BJ (cell line): ENCODE measurements at regions of chr17 and their contacts with region 1.

Region 1: GRCh38 chr17:29241015-29241963 is 5.4 kb upstream of the CRYBA1 start:
- DNase-seq: peak; percentile 90
- H3K4me3 ChIP-seq: no peak overlapping the region
- H3K27me3 ChIP-seq: no peaks in the 10 kb centered on the region
- CTCF ChIP-seq: peak; percentile 24; the same call in 1 of the 2 replicates

Region 2: GRCh38 chr17:29252101-29252866 is 11.0 kb after region 1 on chr17:
- CTCF ChIA-PET with region 1: interaction called, 33 read pairs
- POLR2A ChIA-PET with region 1: interaction called, 4 read pairs
- DNase-seq: no peak
- H3K4me3 ChIP-seq: no peak overlapping the region
- H3K27me3 ChIP-seq: no peaks in the 10 kb centered on the region
- CTCF ChIP-seq: peak; percentile 44

Region 3: GRCh38 chr17:29331708-29332085 is 90.4 kb after region 1 on chr17:
- CTCF ChIA-PET with region 1: no interaction called
- POLR2A ChIA-PET with region 1: no interaction called
- DNase-seq: no peak
- H3K4me3 ChIP-seq: no peak overlapping the region
- H3K27me3 ChIP-seq: no peaks in the 10 kb centered on the region
- CTCF ChIP-seq: no peak